ENCODE measurements at regions of chr12 and their contacts with region 1.

Region 1: DNA sequence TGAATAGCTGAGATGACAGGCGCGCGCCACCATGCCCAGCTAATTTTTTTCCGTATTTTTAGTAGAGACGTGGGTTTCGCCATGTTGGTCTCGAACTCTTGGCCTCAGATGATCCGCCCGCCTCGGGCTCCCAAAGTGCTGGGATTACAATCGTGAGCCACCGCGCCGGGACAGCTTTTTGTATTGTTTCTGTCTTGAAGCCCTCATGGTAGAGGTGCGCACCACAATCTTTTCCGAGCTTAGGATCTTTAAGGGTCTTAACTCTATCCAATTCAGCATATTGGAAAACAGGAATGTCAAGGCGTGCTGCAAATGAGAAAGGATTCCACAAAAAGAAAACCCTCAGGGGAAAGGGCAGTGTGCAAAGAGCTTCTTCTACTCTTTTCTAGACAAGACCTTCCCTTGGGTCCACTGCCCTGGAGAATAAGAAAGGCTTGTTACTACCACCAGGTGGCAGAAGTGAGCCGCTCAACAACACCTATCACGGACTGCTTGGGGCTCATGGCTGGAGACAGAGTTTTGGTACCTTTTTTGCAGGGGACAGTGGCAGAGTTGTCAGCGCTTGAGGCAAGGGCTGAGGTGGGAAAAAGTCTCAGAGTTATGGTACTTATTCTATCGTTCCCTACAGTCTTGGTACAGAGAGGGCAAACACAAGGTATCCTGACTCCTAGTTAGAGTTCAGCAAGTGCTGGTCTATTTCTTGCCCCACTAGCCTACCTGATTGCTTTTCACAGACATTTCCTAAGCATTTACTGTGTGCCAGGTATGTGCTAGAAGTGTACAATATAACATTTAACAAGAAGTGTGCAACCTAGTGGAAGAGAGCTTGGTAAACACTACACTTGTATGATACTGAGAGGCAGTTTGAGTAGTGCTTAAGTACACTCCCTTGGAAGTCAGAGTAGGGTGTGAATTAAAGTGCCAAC is 16.4 kb upstream of the SP7 start:
- DNase-seq: peak in 1 of 2 experiments; percentile 85
- H3K4me3 ChIP-seq: no peak overlapping the region
- H3K27ac ChIP-seq: no peak overlapping the region
- H3K4me1 ChIP-seq: no peaks in the 10 kb centered on the region
- H3K27me3 ChIP-seq: no peaks in the 10 kb centered on the region
- CTCF ChIP-seq: peak; percentile 66 to 94 (median 90)
- EP300 ChIP-seq: no peak
- POLR2A ChIP-seq: no peak
- RAD21 ChIP-seq: peak; percentile 91 to 98

Region 2: GRCh38 chr12:53365245-53365904 is 12.8 kb after region 1 on chr12:
- CTCF ChIA-PET with region 1: interaction called, 22 read pairs
- POLR2A ChIA-PET with region 1: interaction called, 3 read pairs
- DNase-seq: no peak
- H3K4me3 ChIP-seq: no peak overlapping the region
- H3K27ac ChIP-seq: no peak overlapping the region
- H3K4me1 ChIP-seq: no peaks in the 10 kb centered on the region; a peak in 1 of 7 replicates
- H3K27me3 ChIP-seq: no peaks in the 10 kb centered on the region
- CTCF ChIP-seq: no peak
- EP300 ChIP-seq: no peak
- POLR2A ChIP-seq: no peak
- RAD21 ChIP-seq: no peak

Region 3: DNA sequence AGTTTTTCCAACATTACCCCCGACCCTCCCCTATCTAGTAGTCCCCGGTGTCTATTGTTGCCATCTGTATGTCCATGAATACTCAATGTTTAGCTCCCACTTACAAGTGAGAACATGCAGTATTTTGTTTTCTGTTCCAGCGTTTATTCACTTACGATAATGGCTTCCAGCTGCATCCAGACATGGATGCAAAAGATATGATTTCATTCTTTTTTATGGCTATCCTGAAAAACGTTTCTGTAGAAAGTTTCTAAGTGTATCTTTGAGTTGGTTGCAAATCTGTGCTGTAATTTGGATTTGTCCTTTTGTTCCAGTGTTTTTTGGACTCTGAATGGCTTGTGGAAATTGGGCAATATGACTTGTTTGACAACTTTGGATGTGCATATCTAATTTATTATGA is 39.1 kb after region 1 on chr12:
- CTCF ChIA-PET with region 1: interaction called, 25 read pairs
- POLR2A ChIA-PET with region 1: interaction called, 3 read pairs
- DNase-seq: no peak
- H3K4me3 ChIP-seq: no peak overlapping the region
- H3K27ac ChIP-seq: no peak overlapping the region
- H3K4me1 ChIP-seq: no peaks in the 10 kb centered on the region
- H3K27me3 ChIP-seq: no peaks in the 10 kb centered on the region
- CTCF ChIP-seq: no peak
- EP300 ChIP-seq: no peak
- POLR2A ChIP-seq: no peak
- RAD21 ChIP-seq: no peak

Region 4: DNA sequence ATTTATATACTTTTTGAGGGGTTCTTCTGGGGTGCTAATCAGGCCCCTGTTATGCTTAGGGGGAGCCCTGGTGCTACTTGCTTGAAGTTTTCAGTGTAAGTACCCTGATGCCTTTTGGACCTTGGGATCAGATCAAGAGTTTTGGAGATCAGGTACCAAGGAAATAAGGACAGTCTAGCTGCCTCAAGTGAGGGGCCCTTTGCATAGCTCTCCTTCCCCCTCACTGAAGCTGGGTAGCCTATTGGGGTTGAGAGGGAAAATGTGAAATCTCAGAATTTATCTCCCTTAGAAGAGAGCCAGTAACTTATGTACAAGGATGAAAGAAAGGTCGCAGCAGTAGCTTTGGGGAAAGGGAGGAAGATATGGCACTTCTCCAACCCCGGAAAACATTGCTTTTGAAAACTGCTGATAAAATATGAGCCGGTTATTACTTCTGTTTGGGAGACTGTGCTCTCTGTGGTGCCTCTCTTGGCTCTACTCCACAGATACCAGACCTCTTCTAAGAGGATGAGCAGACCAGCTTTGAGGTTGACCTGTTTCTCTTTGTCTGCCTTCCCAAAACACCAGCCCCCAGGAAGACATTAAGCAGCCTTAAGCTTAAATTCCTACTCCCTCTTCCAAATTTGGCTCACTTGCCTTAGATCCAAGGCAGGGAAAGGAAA is 62.3 kb after region 1 on chr12:
- CTCF ChIA-PET with region 1: interaction called, 54 read pairs
- POLR2A ChIA-PET with region 1: no interaction called
- DNase-seq: no peak
- H3K4me3 ChIP-seq: no peak overlapping the region
- H3K27ac ChIP-seq: no peak overlapping the region
- H3K4me1 ChIP-seq: no peaks in the 10 kb centered on the region; a peak in 1 of 7 replicates
- H3K27me3 ChIP-seq: no peaks in the 10 kb centered on the region
- CTCF ChIP-seq: no peak
- EP300 ChIP-seq: no peak
- POLR2A ChIP-seq: no peak
- RAD21 ChIP-seq: no peak

Region 5: DNA sequence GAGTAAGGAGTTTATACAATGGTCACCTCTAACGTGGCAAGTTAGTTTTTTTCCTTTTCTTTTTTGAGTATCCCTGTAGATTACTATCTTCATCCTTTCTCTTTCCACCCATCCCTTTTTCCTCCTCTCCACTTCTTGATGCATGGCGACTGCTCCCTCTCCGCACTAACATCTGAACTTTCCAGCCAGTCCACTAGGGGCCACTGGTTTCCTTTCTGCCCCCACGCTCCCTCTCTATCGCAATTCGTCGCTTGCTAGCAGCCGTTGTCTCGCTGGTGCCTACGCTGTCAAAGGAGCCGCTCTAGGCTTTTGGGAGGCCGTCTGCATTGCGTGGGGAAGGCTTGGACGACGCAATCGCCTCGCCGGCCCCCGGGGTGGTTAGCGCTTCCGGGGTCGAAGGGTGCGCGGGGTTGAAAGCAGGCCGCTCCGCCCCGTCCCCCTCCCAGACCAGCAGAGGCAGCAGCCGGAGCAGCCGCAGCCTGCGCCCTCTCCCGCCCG is 99.1 kb after region 1 on chr12 and contains the start of gene PCBP2:
- CTCF ChIA-PET with region 1: interaction called, 13 read pairs
- POLR2A ChIA-PET with region 1: interaction called, 5 read pairs
- DNase-seq: peak; percentile 92 to 98
- H3K4me3 ChIP-seq: peak within 1 kb of the TSS; percentile 89 to 99 (median 94)
- H3K27ac ChIP-seq: peak within 1 kb of the TSS; percentile 96
- H3K4me1 ChIP-seq: peaks cover 0 to 8% (median 1%) of the 10 kb centered on the region in 4 experiments; a peak in 3 of 7 replicates
- H3K27me3 ChIP-seq: no peaks in the 10 kb centered on the region
- CTCF ChIP-seq: peak; percentile 72 to 94 (median 85)
- EP300 ChIP-seq: peak in 1 of 2 experiments; percentile 86; a peak in 1 of 3 replicates
- POLR2A ChIP-seq: peak; percentile 91
- RAD21 ChIP-seq: no peak; a peak in 1 of 4 replicates
- total RNA-seq, gene PCBP2: 1,114 and 1,123 TPM in 2 replicates